ENCODE measurements at regions of chr11 and their contacts with region 1.

Region 1: GRCh38 chr11:61963282-61964057 is 4.0 kb downstream of the FTH1 start:
- DNase-seq: peak; percentile 73

Region 2: DNA sequence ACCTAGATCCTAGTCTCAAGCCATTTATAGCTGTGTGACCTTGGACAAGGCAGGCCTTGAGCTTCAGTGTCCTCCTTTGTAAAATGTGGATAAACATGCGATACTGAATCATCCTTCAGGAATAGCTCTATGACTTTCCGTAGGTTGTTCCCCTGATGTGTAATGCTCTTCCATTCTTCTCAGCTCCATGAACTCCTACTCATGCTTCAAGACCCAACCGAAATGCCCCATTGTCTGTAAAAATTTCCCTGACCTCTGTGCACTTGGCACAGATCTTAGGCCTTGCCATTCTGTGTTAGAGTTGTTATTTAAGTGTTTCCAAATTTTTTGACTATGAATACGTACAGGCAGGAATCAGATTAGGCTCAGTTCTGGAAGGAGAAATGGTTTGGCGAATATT is 16.6 kb before region 1 on chr11:
- intact Hi-C with region 1: no loop called
- DNase-seq: no peak

Region 3: DNA sequence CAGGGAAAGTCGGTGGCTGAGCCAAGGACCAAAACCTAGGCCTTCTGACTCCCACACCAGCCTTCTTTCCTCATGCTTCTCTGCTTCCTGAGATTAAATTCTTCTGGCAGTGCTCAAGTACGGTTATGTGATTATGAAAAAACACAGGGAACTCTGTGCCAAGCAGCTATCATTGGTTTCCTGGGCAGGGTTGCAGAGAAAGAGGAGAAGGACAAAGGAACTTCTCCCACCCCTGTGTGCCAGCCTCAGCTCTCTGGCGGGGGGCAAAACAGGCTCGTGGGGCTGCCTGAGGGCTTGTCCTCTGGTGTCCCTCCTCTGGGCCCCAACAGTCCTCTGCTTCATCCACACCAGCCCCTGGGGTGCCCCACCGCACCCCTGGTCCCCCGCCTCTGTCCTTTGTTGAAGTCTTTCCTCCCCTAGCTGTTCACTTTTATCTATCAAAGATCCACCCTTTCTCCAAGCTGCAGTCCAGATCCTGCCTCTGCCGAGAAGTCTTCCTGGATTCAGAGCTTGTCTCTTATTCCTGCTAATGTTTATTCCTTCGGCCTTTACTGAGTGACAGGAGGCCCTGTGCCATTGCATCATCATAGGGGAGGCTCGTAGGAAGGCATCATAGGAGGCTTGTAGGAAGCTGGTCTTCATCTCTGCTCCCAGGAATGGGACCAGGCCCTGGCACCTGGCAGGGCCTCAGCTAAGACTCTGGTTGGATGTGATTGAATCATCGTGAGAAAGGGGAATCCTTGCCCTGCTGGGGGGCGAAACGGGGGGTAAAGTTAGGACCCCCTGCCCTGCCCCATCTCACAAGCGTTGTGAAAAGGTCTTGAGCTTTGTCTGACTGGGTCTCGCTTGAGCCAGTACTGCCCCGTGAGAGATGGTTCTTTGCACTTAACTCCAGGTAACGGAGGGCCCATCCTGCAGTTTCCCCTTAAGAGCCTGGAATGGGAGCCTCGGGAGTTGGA is 15.5 kb after region 1 on chr11:
- intact Hi-C with region 1: no loop called
- DNase-seq: peak; percentile 77

Region 4: GRCh38 chr11:62013591-62014476 is 50.4 kb after region 1 on chr11:
- intact Hi-C with region 1: no loop called
- DNase-seq: no peak

Region 5: GRCh38 chr11:62799486-62799885 is 836.0 kb after region 1 on chr11:
- intact Hi-C with region 1: loop called in 1 of 2 experiments (anchors 5 kb)
- DNase-seq: peak; percentile 74